ENCODE measurements at regions of chr9 and their contacts with region 1.

Region 1: GRCh38 chr9:94065535-94065961 is 18.7 kb upstream of the PTPDC1 start:
- DNase-seq: peak; percentile 88
- ATAC-seq: peak; percentile 62
- H3K4me3 Mint-ChIP-seq: no peak overlapping the region
- H3K27ac Mint-ChIP-seq: no peak overlapping the region
- H3K4me1 Mint-ChIP-seq: peaks cover 4% of the 10 kb centered on the region
- H3K27me3 Mint-ChIP-seq: no peaks in the 10 kb centered on the region
- CTCF ChIP-seq: peak; percentile 92

Region 2: GRCh38 chr9:94014065-94014654 is 51.4 kb before region 1 on chr9:
- CTCF ChIA-PET with region 1: interaction called, 17 read pairs
- POLR2A ChIA-PET with region 1: no interaction called
- intact Hi-C with region 1: no loop called
- DNase-seq: no peak
- ATAC-seq: no peak
- H3K4me3 Mint-ChIP-seq: no peak overlapping the region
- H3K27ac Mint-ChIP-seq: no peak overlapping the region
- H3K4me1 Mint-ChIP-seq: peaks cover 12% of the 10 kb centered on the region
- H3K27me3 Mint-ChIP-seq: no peaks in the 10 kb centered on the region
- CTCF ChIP-seq: peak; percentile 64

Region 3: GRCh38 chr9:94076557-94076956 is 11.0 kb after region 1 on chr9:
- CTCF ChIA-PET with region 1: interaction called, 19 read pairs
- POLR2A ChIA-PET with region 1: no interaction called
- intact Hi-C with region 1: no loop called
- DNase-seq: no peak
- ATAC-seq: no peak
- H3K4me3 Mint-ChIP-seq: no peak overlapping the region
- H3K27ac Mint-ChIP-seq: no peak overlapping the region
- H3K4me1 Mint-ChIP-seq: peaks cover 1% of the 10 kb centered on the region
- H3K27me3 Mint-ChIP-seq: no peaks in the 10 kb centered on the region
- CTCF ChIP-seq: no peak